ENCODE measurements at regions of chr20 and their contacts with region 1.

Region 1: DNA sequence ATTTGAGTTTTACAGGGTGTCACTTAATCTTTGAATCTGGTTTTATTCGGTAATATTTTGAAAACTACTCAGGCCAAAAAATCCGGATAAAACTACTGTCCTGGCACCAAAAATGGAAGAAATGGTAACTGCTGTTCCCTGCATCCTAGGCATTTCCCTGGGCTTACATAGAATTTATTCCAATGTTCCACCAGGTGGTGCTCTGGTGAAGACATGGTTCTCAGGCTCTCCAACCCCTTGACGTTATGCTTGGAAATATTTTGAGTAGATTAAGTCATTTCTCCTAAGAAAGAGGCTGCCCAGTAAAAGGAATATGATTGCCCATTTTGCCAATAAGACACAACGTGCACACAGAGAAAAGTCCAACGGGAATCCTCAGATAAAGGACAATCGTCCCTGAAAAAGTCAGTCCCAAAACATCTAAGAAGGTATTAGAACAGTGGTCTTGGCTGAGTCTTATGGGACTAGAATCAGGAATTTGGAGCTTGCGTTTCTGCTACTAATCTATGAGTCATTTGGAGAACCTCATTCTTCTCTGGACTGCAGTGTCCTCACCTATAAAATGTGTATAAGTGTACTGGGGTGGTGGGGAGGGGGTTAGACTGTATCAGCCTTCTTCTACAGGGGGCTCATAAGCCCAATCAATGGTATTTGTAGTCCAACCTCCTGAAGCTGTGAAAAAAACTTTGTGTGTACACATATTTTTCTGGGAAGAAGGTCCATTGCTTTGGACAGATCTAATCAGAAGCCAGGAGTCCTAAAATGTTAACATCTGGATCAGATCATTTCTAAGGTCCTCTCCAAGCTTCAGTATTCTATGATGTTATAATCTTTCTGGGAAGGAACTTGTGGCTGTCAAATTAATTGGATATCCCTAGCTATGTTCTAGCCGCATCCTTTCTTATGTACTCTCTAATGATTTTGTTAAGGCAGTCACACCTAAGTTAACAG is 131.0 kb upstream of the BMP2 start:
- DNase-seq: no peak
- ATAC-seq: peak; percentile 73
- H3K4me3 ChIP-seq: no peak overlapping the region
- H3K27ac ChIP-seq: no peak overlapping the region
- H3K4me1 ChIP-seq: no peaks in the 10 kb centered on the region
- H3K27me3 ChIP-seq: no peaks in the 10 kb centered on the region
- CTCF ChIP-seq: peak; percentile 24 to 54 (median 25); a peak in 3 of 6 replicates
- EP300 ChIP-seq: no peak
- POLR2A ChIP-seq: no peak
- RAD21 ChIP-seq: peak; percentile 36

Region 2: GRCh38 chr20:6426287-6426891 is 210.1 kb before region 1 on chr20:
- CTCF ChIA-PET with region 1: no interaction called
- POLR2A ChIA-PET with region 1: no interaction called
- RAD21 ChIA-PET with region 1: no interaction called
- SMC1A ChIA-PET with region 1: no interaction called
- in situ Hi-C with region 1: no loop called
- intact Hi-C with region 1: no loop called
- DNase-seq: no peak
- ATAC-seq: no peak
- H3K4me3 ChIP-seq: no peak overlapping the region
- H3K27ac ChIP-seq: no peak overlapping the region
- H3K4me1 ChIP-seq: no peaks in the 10 kb centered on the region
- H3K27me3 ChIP-seq: no peaks in the 10 kb centered on the region; a peak in 1 of 4 replicates
- CTCF ChIP-seq: no peak
- EP300 ChIP-seq: no peak
- POLR2A ChIP-seq: no peak
- RAD21 ChIP-seq: no peak

Region 3: GRCh38 chr20:6613280-6613861 is 23.1 kb before region 1 on chr20:
- CTCF ChIA-PET with region 1: interaction called, 7 read pairs
- POLR2A ChIA-PET with region 1: no interaction called
- RAD21 ChIA-PET with region 1: no interaction called
- SMC1A ChIA-PET with region 1: interaction called, 15 read pairs
- in situ Hi-C with region 1: no loop called
- intact Hi-C with region 1: no loop called
- DNase-seq: no peak
- ATAC-seq: peak; percentile 92
- H3K4me3 ChIP-seq: no peak overlapping the region
- H3K27ac ChIP-seq: no peak overlapping the region
- H3K4me1 ChIP-seq: no peaks in the 10 kb centered on the region
- H3K27me3 ChIP-seq: no peaks in the 10 kb centered on the region
- CTCF ChIP-seq: no peak
- EP300 ChIP-seq: no peak
- POLR2A ChIP-seq: no peak
- RAD21 ChIP-seq: no peak

Region 4: GRCh38 chr20:6651016-6651415 is 14.5 kb after region 1 on chr20:
- CTCF ChIA-PET with region 1: interaction called, 8 read pairs
- POLR2A ChIA-PET with region 1: no interaction called
- RAD21 ChIA-PET with region 1: interaction called, 6 read pairs
- SMC1A ChIA-PET with region 1: interaction called, 11 read pairs
- in situ Hi-C with region 1: no loop called
- intact Hi-C with region 1: no loop called
- DNase-seq: no peak
- ATAC-seq: peak; percentile 19
- H3K4me3 ChIP-seq: no peak overlapping the region
- H3K27ac ChIP-seq: no peak overlapping the region
- H3K4me1 ChIP-seq: no peaks in the 10 kb centered on the region
- H3K27me3 ChIP-seq: no peaks in the 10 kb centered on the region
- CTCF ChIP-seq: no peak
- EP300 ChIP-seq: no peak
- POLR2A ChIP-seq: no peak
- RAD21 ChIP-seq: no peak

Region 5: GRCh38 chr20:6692568-6693173 is 56.2 kb after region 1 on chr20:
- CTCF ChIA-PET with region 1: interaction called, 7 read pairs
- POLR2A ChIA-PET with region 1: no interaction called
- RAD21 ChIA-PET with region 1: interaction called, 4 read pairs
- SMC1A ChIA-PET with region 1: interaction called, 11 read pairs
- in situ Hi-C with region 1: no loop called
- intact Hi-C with region 1: loop called (anchors 5 kb)
- DNase-seq: no peak
- ATAC-seq: peak; percentile 91
- H3K4me3 ChIP-seq: no peak overlapping the region
- H3K27ac ChIP-seq: no peak overlapping the region
- H3K4me1 ChIP-seq: no peaks in the 10 kb centered on the region
- H3K27me3 ChIP-seq: no peaks in the 10 kb centered on the region
- CTCF ChIP-seq: no peak; a peak in 1 of 6 replicates
- EP300 ChIP-seq: no peak
- POLR2A ChIP-seq: no peak
- RAD21 ChIP-seq: no peak